BJ (cell line): ENCODE measurements at regions of chr11 and their contacts with region 1.

Region 1: DNA sequence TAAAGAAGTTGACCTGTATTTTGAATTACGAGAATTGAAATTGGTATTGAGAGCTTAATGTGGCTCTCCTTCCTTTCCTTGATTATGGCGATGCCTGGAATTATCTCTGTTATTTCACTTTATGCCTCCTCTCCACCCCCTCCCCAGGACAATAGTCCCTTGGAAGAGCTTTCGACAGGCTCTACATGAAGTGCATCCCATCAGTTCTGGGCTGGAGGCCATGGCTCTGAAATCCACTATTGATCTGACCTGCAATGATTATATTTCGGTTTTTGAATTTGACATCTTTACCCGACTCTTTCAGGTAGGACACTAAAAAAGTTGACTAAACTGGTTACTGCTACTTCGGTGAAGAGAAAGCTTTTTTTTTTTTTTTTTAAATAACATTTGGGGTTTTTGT is 43.2 kb downstream of the MCAM start:
- DNase-seq: no peak
- H3K4me3 ChIP-seq: no peak overlapping the region
- H3K27me3 ChIP-seq: no peaks in the 10 kb centered on the region
- CTCF ChIP-seq: no peak

Region 2: GRCh38 chr11:119152043-119152442 is 121.7 kb before region 1 on chr11:
- CTCF ChIA-PET with region 1: no interaction called
- POLR2A ChIA-PET with region 1: no interaction called
- DNase-seq: no peak
- H3K4me3 ChIP-seq: no peak overlapping the region
- H3K27me3 ChIP-seq: peaks cover 26% of the 10 kb centered on the region
- CTCF ChIP-seq: no peak

Region 3: GRCh38 chr11:119284344-119285157 is 10.8 kb after region 1 on chr11:
- CTCF ChIA-PET with region 1: interaction called, 19 read pairs
- POLR2A ChIA-PET with region 1: interaction called, 7 read pairs
- DNase-seq: no peak
- H3K4me3 ChIP-seq: no peak overlapping the region
- H3K27me3 ChIP-seq: no peaks in the 10 kb centered on the region
- CTCF ChIP-seq: peak; percentile 55

Region 4: GRCh38 chr11:119403021-119403420 is 129.3 kb after region 1 on chr11:
- CTCF ChIA-PET with region 1: no interaction called
- POLR2A ChIA-PET with region 1: no interaction called
- DNase-seq: peak; percentile 72
- H3K4me3 ChIP-seq: no peak overlapping the region
- H3K27me3 ChIP-seq: no peaks in the 10 kb centered on the region
- CTCF ChIP-seq: no peak